Stomach (tissue), 19 donors: ENCODE measurements at regions of chr5 and their contacts with region 1.

Region 1: GRCh38 chr5:139765409-139766217 is 30.0 kb upstream of the PSD2 start:
- DNase-seq: peak; percentile 77 to 94
- H3K4me3 ChIP-seq: peak overlapping the region; percentile 48 to 62 (median 56)
- H3K27ac ChIP-seq: peak overlapping the region in 3 of 5 donors; percentile 32 to 77 (median 75)
- H3K4me1 ChIP-seq: peaks cover 8 to 32% (median 21%) of the 10 kb centered on the region in 4 donors
- H3K27me3 ChIP-seq: peaks cover 6 to 30% (median 20%) of the 10 kb centered on the region in 3 donors
- CTCF ChIP-seq: peak in 6 of 7 experiments; percentile 20 to 100 (median 96)
- EP300 ChIP-seq: no peak
- POLR2A ChIP-seq: no peak

Region 2: GRCh38 chr5:139633295-139634027 is 132.2 kb before region 1 on chr5:
- intact Hi-C with region 1: loop called (anchors 5 kb)
- DNase-seq: peak; percentile 71 to 93
- H3K4me3 ChIP-seq: no peak overlapping the region
- H3K27ac ChIP-seq: no peak overlapping the region
- H3K4me1 ChIP-seq: peaks cover 34 to 45% (median 39%) of the 10 kb centered on the region in 4 donors
- H3K27me3 ChIP-seq: peaks cover 0 to 3% (median 0%) of the 10 kb centered on the region in 3 donors
- CTCF ChIP-seq: peak in 6 of 7 experiments; percentile 46 to 99 (median 96)
- EP300 ChIP-seq: no peak
- POLR2A ChIP-seq: no peak

Region 3: GRCh38 chr5:139644661-139645429 is 120.8 kb before region 1 on chr5:
- intact Hi-C with region 1: no loop called
- DNase-seq: peak; percentile 5 to 14
- H3K4me3 ChIP-seq: no peak overlapping the region
- H3K27ac ChIP-seq: peak overlapping the region in 1 of 5 donors; percentile 57
- H3K4me1 ChIP-seq: peaks cover 28 to 59% (median 48%) of the 10 kb centered on the region in 4 donors
- H3K27me3 ChIP-seq: peaks cover 0 to 30% (median 0%) of the 10 kb centered on the region in 3 donors
- CTCF ChIP-seq: no peak
- EP300 ChIP-seq: no peak
- POLR2A ChIP-seq: no peak

Region 4: DNA sequence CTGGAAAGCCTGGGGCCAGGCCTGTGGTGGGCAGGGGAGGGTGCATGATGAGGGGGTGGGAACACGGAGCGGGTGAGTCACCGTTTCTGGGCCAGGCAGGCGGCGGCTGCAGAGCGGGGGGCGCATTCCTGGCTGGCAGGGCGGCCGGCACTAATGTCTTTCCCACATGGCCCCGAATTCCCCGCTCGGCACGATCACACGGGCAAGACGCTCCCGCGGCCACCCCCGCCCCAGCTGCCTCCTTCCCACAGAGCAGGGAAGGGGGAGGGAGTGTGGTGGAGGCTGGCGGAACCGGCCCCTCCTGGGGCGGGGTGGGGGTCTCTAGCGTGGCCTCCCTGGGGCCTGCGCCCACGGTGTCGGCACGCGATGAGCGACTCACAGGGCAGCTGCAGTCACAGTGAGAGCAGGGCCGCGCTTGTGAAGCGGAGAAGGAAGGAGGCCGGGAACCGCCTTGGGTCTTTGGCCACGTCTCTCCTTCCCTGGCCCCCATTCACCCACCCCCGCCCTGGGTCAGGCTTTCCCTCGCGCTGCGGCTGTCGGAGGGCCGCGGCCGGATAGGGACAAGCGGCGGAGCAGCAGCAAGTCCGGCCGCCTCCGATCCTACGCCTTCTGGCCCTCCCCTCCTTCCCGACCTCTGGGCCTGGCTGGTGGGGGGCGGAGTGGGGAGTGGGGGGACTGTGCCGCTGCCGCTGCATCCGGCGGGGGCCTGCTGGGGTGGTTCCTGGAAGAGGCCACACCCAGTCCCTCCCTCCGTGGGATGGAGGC is 68.5 kb before region 1 on chr5:
- intact Hi-C with region 1: loop called (anchors 10 kb)
- DNase-seq: peak; percentile 63 to 95
- H3K4me3 ChIP-seq: peak overlapping the region; percentile 30 to 50 (median 41)
- H3K27ac ChIP-seq: peak overlapping the region; percentile 77 to 92 (median 86)
- H3K4me1 ChIP-seq: peaks cover 36 to 65% (median 51%) of the 10 kb centered on the region in 4 donors
- H3K27me3 ChIP-seq: peaks cover 0 to 19% (median 11%) of the 10 kb centered on the region in 3 donors
- CTCF ChIP-seq: no peak
- EP300 ChIP-seq: no peak
- POLR2A ChIP-seq: no peak

Region 5: GRCh38 chr5:139955053-139955605 is 189.5 kb after region 1 on chr5:
- intact Hi-C with region 1: no loop called
- DNase-seq: no peak
- H3K4me3 ChIP-seq: no peak overlapping the region
- H3K27ac ChIP-seq: no peak overlapping the region
- H3K4me1 ChIP-seq: no peaks in the 10 kb centered on the region
- H3K27me3 ChIP-seq: peaks cover 0 to 4% (median 0%) of the 10 kb centered on the region in 3 donors
- CTCF ChIP-seq: no peak
- EP300 ChIP-seq: no peak
- POLR2A ChIP-seq: no peak